CD8-positive, alpha-beta memory T cell (primary cell): ENCODE measurements at regions of chr3 and their contacts with region 1.

Region 1: DNA sequence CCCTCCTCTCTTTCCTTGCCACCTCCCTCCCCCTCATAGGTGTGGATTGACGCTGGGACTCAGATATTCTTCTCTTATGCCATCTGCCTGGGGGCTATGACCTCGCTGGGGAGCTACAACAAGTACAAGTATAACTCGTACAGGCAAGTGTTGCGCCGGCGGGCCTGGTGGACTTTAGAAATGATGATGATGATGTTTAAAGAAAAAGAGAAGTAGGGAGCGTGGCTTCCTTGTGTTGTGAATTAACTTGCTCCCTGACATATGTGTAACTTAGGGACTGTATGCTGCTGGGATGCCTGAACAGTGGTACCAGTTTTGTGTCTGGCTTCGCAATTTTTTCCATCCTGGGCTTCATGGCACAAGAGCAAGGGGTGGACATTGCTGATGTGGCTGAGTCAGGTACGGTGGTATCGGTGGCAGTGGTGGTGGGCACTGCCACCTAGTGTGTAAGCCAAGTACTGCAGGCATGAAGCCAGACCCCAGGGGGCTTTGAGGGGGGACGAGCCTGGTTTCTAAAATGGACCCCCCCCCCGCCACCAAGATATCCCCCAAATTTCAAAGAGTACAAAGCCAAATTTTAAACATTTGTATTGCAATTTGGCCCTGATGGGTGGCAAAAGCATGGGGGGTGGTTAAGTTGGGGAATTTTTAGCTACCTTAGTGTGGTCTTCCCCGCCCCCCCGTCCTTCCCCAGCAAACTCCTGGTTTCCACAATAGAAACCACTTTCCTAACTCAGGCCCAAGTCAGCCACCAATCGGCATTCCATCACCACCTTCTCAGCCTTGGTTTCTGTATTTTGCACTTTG is 65.6 kb downstream of the SLC6A6 start:
- DNase-seq: peak; percentile 18 to 65 (median 38)
- H3K4me3 ChIP-seq: no peak overlapping the region
- H3K4me3 Mint-ChIP-seq: no peak overlapping the region
- H3K27ac ChIP-seq: no peak overlapping the region
- H3K27ac Mint-ChIP-seq: peak overlapping the region in 3 of 8 donors; percentile 40 to 83 (median 66)
- H3K4me1 ChIP-seq: no peaks in the 10 kb centered on the region
- H3K4me1 Mint-ChIP-seq: peaks cover 0 to 3% (median 0%) of the 10 kb centered on the region in 3 donors
- H3K27me3 ChIP-seq: no peaks in the 10 kb centered on the region
- H3K27me3 Mint-ChIP-seq: no peaks in the 10 kb centered on the region

Region 2: GRCh38 chr3:14431892-14432834 is 35.9 kb before region 1 on chr3:
- CTCF ChIA-PET with region 1: interaction called, 13 read pairs
- POLR2A ChIA-PET with region 1: no interaction called
- DNase-seq: peak; percentile 91 to 98 (median 92)
- H3K4me3 ChIP-seq: peak overlapping the region; percentile 57
- H3K4me3 Mint-ChIP-seq: peak overlapping the region; percentile 68 to 91 (median 83)
- H3K27ac ChIP-seq: peak overlapping the region; percentile 93
- H3K27ac Mint-ChIP-seq: peak overlapping the region; percentile 97 to 100 (median 100)
- H3K4me1 ChIP-seq: peaks cover 92% of the 10 kb centered on the region
- H3K4me1 Mint-ChIP-seq: peaks cover 87 to 98% (median 91%) of the 10 kb centered on the region in 3 donors
- H3K27me3 ChIP-seq: no peaks in the 10 kb centered on the region
- H3K27me3 Mint-ChIP-seq: peaks cover 0 to 3% of the 10 kb centered on the region in 2 donors

Region 3: DNA sequence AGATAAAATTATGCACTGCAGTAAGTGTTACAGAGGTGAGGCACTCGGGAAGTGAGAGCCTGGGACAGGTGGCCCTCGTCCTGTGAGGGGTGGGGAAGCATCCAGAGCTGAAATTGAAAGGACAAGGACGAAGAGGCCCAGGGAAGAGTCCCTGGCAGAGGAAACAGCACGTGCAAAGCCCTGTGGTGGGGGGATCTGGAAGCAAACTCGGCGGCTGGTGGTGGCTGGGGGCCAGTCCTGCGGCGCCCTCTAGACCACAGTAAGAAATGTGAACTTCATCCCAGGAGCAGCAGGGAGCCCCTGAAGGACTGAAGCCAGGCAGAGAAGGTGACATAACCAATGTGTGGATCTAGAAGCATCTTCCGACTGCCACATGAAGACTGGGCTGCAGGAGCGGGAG is 29.3 kb after region 1 on chr3:
- CTCF ChIA-PET with region 1: no interaction called
- POLR2A ChIA-PET with region 1: no interaction called
- DNase-seq: no peak
- H3K4me3 ChIP-seq: no peak overlapping the region
- H3K4me3 Mint-ChIP-seq: no peak overlapping the region
- H3K27ac ChIP-seq: no peak overlapping the region
- H3K27ac Mint-ChIP-seq: no peak overlapping the region
- H3K4me1 ChIP-seq: no peaks in the 10 kb centered on the region
- H3K4me1 Mint-ChIP-seq: no peaks in the 10 kb centered on the region
- H3K27me3 ChIP-seq: no peaks in the 10 kb centered on the region
- H3K27me3 Mint-ChIP-seq: peaks cover 4 to 5% of the 10 kb centered on the region in 2 donors